ENCODE measurements at regions of chr6 and their contacts with region 1.

Region 1: DNA sequence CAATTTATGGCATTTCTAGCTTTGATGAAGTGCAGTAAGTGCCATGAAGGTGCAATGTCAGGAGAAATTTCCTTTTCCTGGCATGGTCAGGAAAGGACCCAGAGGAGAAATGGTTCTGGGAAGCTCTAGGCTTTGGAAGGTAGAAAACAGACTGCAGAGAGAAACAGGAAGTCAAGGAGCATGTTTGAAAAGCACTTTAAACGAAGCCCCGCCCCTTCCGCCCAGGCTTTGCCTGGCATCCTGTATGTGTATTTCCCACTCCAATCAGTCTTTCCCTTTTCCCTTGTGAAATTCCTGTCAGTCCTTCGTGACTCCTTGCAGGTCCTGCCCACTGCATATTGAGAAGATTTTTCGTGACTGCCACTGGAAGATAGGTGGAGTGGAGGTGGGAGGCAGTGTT is 320.9 kb upstream of the SASH1 start:
- DNase-seq: peak; percentile 91
- H3K4me3 ChIP-seq: peak overlapping the region in 2 of 3 experiments; percentile 3 to 18
- H3K27ac ChIP-seq: peak overlapping the region; percentile 87
- H3K4me1 ChIP-seq: peaks cover 18% of the 10 kb centered on the region
- H3K27me3 ChIP-seq: no peaks in the 10 kb centered on the region
- CTCF ChIP-seq: no peak
- POLR2A ChIP-seq: no peak

Region 2: DNA sequence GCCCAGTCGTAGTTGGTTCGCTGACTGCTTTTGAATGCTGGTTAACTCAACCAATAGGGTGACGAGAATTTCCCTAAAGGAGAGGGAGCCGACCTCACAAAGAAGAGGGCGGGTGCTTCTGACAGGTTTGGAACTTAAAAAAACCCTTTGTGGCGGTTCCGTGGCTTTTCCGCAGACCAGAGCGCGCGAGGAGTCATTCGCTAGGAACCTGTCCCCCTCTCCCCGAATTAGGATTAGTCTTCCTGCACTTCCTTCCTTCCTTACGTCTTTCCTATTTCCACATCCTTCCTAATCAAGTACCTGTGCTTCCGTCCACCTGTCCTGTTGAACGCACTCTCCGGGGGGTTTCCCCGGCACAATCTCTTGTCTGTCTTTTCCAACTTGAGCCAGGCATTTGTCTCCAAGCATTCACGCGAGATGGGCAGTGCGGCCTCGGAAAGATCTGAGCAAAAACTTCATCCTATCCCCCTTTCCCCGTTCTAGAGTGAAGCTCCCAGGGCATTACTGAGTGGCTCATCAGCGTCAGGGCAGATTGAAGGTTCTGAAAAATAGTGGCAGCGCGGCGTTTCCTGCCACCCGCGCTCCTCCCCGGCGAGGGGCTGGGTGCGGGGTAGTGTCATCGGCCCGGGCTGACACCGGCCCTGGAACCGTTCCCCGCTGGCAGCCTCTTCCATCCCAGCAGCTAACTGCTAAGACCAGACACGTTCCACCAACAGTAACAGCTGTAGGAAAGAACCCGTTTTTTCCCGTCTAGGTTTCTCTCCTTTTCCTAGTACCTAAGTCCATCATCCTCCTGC is 819.0 kb before region 1 on chr6:
- CTCF ChIA-PET with region 1: no interaction called
- POLR2A ChIA-PET with region 1: no interaction called
- dilution Hi-C with region 1: no loop called
- intact Hi-C with region 1: loop called (anchors 2 kb)
- DNase-seq: peak; percentile 95
- H3K4me3 ChIP-seq: peak overlapping the region; percentile 58 to 92 (median 89)
- H3K27ac ChIP-seq: peak overlapping the region; percentile 86
- H3K4me1 ChIP-seq: peaks cover 20% of the 10 kb centered on the region
- H3K27me3 ChIP-seq: no peaks in the 10 kb centered on the region
- CTCF ChIP-seq: no peak
- POLR2A ChIP-seq: peak; percentile 61

Region 3: GRCh38 chr6:147868427-147869190 is 153.1 kb before region 1 on chr6:
- CTCF ChIA-PET with region 1: no interaction called
- POLR2A ChIA-PET with region 1: no interaction called
- dilution Hi-C with region 1: no loop called
- intact Hi-C with region 1: loop called (anchors 1 kb)
- DNase-seq: peak; percentile 80
- H3K4me3 ChIP-seq: peak overlapping the region in 1 of 3 experiments; percentile 32
- H3K27ac ChIP-seq: peak overlapping the region; percentile 90
- H3K4me1 ChIP-seq: peaks cover 34% of the 10 kb centered on the region
- H3K27me3 ChIP-seq: no peaks in the 10 kb centered on the region
- CTCF ChIP-seq: no peak
- POLR2A ChIP-seq: no peak

Region 4: DNA sequence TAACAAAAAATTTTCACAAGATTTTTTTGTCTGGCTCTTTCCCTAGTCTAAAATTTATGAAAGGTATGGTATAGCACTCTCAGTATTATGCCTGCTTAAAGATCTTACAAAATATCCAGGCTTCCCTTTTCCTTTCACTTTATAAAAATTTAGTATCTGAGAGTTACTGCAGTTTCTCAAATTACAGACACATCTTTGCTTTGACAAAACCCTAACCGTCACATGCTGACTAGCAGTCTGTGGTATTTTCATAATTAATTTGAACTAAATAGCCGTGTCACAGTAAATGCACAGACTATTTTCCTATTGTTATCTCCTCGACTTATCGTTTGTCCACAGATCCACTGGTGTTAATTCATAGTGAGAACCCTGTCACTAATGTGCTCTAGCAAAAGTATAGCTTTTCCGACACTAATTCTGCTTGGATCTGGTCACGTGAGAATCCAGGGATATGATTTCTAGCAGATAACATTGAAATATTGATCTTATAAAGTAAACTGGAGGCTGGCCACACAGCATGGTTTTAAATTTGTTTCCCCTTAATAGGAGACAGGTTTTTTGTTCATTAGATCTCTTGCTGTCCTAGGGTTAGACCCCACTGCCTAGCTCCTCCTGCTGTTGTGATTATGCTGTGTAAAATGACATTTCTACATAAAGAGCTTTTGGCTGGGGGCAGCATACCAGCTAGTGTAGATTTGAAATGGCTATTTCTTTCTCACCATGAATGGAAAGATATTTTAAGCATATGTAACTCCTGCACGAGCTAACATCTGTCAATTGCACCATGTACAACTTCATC is 19.7 kb before region 1 on chr6:
- CTCF ChIA-PET with region 1: no interaction called
- POLR2A ChIA-PET with region 1: no interaction called
- dilution Hi-C with region 1: no loop called
- intact Hi-C with region 1: no loop called
- DNase-seq: no peak
- H3K4me3 ChIP-seq: no peak overlapping the region
- H3K27ac ChIP-seq: no peak overlapping the region
- H3K4me1 ChIP-seq: no peaks in the 10 kb centered on the region
- H3K27me3 ChIP-seq: no peaks in the 10 kb centered on the region
- CTCF ChIP-seq: no peak
- POLR2A ChIP-seq: no peak

Region 5: GRCh38 chr6:148064406-148065134 is 42.9 kb after region 1 on chr6:
- CTCF ChIA-PET with region 1: no interaction called
- POLR2A ChIA-PET with region 1: no interaction called
- dilution Hi-C with region 1: no loop called
- intact Hi-C with region 1: loop called (anchors 1 kb)
- DNase-seq: peak; percentile 90
- H3K4me3 ChIP-seq: no peak overlapping the region
- H3K27ac ChIP-seq: peak overlapping the region; percentile 96
- H3K4me1 ChIP-seq: peaks cover 32% of the 10 kb centered on the region
- H3K27me3 ChIP-seq: no peaks in the 10 kb centered on the region
- CTCF ChIP-seq: no peak
- POLR2A ChIP-seq: no peak

Region 6: DNA sequence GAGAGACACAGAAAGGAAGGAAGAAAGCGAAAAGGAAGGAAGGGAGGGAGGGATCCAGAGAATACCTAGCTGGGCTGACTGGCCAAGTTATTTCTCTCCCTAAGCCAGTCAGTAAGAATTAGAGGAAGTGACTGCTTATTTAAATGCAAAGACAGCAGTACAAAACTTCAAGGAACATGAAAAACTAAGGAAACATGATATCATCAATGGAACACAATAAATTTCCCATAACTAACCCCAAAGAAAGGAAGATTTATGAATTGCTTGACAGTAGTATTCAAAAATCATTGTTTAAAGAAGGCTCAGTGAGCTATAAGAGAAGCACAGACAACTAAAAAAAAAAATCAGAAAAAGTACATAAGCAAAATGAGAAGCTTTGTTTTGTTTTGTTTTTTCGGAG is 68.6 kb after region 1 on chr6:
- CTCF ChIA-PET with region 1: no interaction called
- POLR2A ChIA-PET with region 1: no interaction called
- dilution Hi-C with region 1: no loop called
- intact Hi-C with region 1: loop called (anchors 1 kb)
- DNase-seq: peak; percentile 85
- H3K4me3 ChIP-seq: no peak overlapping the region
- H3K27ac ChIP-seq: peak overlapping the region; percentile 55
- H3K4me1 ChIP-seq: peaks cover 13% of the 10 kb centered on the region
- H3K27me3 ChIP-seq: no peaks in the 10 kb centered on the region
- CTCF ChIP-seq: no peak
- POLR2A ChIP-seq: no peak

Region 7: DNA sequence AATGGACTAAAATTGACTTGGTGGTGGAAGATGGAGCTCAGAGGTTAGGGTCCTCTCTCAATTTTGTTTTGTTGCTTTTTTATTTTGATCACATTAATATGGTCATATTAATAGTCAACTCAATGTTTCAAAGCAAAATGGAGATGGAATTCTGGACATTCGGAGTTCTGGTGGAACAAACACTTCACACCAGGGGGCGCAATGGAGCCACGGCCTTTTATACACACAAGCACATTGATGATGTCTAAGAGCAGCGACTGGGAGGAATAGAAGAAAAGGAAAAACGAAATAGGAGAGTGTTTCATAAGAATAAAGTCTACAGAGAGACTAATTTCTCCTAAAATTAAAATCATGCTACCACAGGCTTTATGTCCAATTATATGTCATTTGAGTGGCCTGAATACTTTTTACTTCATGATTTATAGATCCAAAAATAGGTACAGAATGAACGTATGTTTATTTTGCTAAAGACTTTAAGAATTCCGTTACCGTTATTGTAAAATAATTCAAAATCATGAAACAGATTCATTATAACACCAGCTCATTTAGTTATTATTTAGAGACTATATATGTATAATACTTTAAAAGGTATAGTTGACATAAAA is 123.3 kb after region 1 on chr6:
- CTCF ChIA-PET with region 1: no interaction called
- POLR2A ChIA-PET with region 1: no interaction called
- dilution Hi-C with region 1: no loop called
- intact Hi-C with region 1: loop called (anchors 1 kb)
- DNase-seq: peak; percentile 74
- H3K4me3 ChIP-seq: no peak overlapping the region
- H3K27ac ChIP-seq: peak overlapping the region; percentile 99
- H3K4me1 ChIP-seq: peaks cover 41% of the 10 kb centered on the region
- H3K27me3 ChIP-seq: no peaks in the 10 kb centered on the region
- CTCF ChIP-seq: peak; percentile 75 to 81
- POLR2A ChIP-seq: no peak

Region 8: DNA sequence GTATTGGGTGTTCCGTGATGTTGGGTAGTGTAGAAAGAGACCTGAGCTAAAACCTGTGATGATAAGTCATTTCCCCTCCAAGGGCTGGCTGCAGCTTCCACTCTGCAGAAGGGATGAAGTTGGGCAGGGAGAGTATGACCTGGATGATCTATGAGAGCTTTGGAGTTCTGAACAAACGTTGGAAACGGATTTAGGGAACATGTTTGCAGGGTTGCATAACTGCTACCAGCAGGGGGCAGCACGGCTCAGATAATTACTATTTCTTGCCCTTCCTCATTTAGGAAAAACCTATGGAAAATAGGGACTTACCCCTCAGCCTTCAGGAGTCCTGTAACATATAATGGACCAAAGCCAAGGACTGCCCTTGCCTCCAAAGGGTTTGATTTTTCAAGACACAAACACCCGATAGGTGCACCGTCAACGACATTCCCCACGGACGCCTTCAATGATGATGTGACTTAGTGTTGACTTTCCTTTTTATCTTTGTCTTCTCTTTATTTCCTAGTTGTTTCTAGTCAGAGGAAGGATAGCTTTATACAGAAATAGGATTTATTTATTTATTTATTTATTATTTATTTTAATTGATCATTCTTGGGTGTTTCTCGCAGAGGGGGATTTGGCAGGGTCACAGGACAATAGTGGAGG is 156.0 kb after region 1 on chr6:
- CTCF ChIA-PET with region 1: no interaction called
- POLR2A ChIA-PET with region 1: no interaction called
- dilution Hi-C with region 1: no loop called
- intact Hi-C with region 1: no loop called
- DNase-seq: peak; percentile 72
- H3K4me3 ChIP-seq: no peak overlapping the region
- H3K27ac ChIP-seq: no peak overlapping the region
- H3K4me1 ChIP-seq: peaks cover 5% of the 10 kb centered on the region
- H3K27me3 ChIP-seq: no peaks in the 10 kb centered on the region
- CTCF ChIP-seq: peak; percentile 70 to 82
- POLR2A ChIP-seq: no peak

Region 9: DNA sequence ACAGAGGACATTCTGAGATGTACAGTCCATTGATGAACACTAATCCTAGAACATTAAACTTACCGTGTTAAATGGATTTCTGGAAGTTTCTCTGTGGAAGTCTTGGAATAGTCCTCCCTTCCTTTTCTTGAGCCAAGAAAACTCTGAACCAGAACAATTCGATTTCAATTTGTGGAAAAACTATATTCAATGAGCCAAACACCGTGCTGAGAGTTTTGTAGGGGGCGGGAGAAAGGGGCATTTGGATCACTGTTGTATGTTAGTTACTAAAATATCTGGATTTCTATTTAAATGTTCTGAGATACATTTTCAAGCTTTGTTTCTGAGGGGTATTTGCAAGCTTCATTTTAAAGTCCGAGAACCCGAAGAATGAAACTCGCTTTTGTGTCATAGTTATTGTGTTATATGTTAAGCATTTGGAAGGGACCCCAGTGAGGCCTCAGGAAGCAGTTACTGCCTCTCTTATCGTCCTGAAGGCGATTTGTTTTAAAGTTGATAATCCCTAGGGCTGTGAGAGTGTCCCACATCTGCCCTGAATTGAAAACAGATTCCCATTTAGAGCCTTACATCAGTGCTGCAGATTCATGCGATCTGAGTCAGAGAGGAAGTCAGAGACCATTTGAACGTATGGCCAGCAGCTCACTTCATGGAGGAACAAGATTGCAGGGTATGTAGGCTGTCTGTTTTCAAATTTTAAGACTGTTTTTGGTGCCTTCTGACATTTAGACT is 250.2 kb after region 1 on chr6:
- CTCF ChIA-PET with region 1: no interaction called
- POLR2A ChIA-PET with region 1: no interaction called
- dilution Hi-C with region 1: no loop called
- intact Hi-C with region 1: loop called (anchors 1 kb)
- DNase-seq: peak; percentile 89
- H3K4me3 ChIP-seq: peak overlapping the region in 1 of 3 experiments; percentile 45
- H3K27ac ChIP-seq: peak overlapping the region; percentile 93
- H3K4me1 ChIP-seq: peaks cover 47% of the 10 kb centered on the region
- H3K27me3 ChIP-seq: no peaks in the 10 kb centered on the region
- CTCF ChIP-seq: no peak
- POLR2A ChIP-seq: peak; percentile 33